PC-3 (cell line): ENCODE measurements at regions of chr21 and their contacts with region 1.

Region 1: DNA sequence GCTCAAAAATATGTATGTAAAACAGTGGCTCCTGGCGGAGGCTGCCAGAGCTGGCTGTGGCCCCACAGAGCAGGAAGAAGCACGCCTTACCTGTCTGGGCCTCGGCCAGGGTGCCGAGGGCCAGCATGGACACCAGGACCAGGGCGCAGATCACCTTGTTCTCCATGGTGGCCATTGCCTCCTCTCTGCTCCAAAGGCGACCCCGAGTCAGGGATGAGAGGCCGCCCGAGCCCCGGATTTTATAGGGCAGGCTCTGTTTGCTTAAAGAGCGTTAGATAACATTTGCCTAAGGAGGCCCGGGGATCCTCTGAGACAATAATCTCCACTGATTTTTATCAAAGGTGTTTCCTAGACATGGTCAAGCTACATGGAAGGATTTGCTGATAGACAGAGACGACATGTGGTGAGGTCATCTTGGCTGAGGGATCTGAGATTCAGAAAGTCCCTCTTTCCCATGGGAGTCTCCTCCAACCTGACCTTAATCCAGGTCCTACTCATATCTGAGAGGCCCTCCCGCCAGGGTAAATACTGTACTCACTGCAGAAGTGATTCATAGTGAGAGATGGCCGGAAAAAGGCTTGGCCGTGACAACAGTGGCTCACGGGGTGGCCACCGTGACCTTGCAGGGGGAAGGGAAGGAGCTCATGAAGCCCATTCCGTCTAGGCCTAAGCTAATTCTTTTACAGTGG is at the start of gene TFF1:
- DNase-seq: peak; percentile 95
- ATAC-seq: peak; percentile 93
- H3K4me3 ChIP-seq: no peak within 1 kb of the TSS
- H3K27ac ChIP-seq: peak within 1 kb of the TSS; percentile 97
- H3K4me1 ChIP-seq: peaks cover 56% of the 10 kb centered on the region
- H3K27me3 ChIP-seq: no peaks in the 10 kb centered on the region
- CTCF ChIP-seq: no peak
- total RNA-seq, gene TFF1: 99.2 and 111 TPM in 2 replicates

Region 2: DNA sequence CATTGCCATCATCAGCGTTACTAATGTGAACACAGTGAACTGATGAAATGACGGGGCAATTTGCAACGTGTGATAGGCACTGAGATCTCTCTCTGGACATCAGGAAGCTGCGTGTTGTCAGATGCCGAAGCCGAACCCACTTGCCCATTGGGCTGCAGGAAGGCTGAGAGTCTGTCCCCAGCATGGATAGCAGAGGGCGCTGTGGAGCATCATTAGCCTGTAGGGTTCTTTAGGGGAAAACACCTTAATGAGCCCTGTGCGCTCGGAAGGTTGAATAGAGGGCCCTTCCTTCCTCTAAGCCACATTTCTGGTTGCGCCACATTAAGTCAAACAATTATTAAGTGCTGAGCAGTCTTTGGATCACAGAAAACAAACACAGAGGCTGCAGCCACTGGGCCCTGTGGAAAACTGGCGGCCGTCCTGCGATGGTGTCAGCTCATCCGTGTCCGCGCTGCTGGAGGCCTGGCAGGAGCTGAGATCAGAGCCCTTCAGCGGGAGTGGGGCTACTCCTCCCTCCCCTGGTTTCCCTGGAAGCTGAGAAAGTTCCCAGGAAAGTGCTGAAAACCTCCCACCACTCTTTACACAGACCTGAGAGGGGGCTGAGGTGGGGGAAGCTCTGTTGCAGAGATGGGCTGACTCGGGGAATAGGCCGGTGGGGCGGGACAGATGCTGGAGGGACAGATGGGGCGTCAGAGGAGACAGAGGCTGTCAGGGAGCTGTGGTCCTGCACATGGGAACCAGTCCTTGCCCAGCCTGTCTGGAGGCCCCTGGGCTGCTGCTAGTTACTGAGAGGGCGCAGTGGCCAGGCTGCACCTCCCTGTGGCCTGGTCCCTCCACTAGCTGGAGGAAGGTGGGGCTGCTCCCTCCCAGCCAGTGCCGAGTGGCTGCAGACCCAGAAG is 28.4 kb before region 1 on chr21:
- CTCF ChIA-PET with region 1: interaction called, 18 read pairs
- POLR2A ChIA-PET with region 1: interaction called, 4 read pairs
- intact Hi-C with region 1: loop called (anchors 1 kb)
- DNase-seq: peak; percentile 95
- ATAC-seq: peak; percentile 92
- H3K4me3 ChIP-seq: peak overlapping the region; percentile 41
- H3K27ac ChIP-seq: peak overlapping the region; percentile 94
- H3K4me1 ChIP-seq: peaks cover 15% of the 10 kb centered on the region
- H3K27me3 ChIP-seq: no peaks in the 10 kb centered on the region
- CTCF ChIP-seq: peak; percentile 92

Region 3: DNA sequence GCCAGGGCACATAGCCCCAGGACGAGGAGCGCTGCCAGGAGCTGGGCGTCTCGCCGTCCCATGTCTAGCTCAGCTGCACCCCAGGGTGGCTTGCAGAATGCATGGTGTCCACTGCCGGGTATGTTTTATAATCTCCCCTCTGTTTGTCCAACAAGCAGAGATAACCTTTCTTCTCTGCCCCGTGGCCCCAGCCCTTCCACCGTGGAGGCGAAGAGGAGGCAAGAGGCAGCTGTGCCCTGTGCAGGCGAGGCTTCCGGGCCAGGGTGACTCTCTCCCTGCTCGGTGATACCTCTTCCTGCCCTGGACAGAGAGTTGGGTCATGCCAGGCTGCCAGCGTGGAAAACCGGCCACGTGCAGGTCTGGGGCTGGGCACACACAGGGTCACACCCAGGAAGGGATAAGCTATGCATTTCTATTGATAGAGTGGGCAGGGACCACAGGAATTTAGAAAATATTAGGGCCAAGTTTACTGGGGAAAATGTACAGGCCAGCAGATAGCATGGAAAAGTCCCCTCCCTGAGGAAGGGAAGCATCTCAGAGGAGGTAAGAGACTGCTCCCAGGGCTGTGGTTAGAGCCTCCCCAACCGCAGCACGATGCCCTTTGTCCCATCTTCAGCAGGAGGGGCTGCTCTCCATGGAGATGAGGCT is 15.4 kb before region 1 on chr21 and contains the start of gene TFF2:
- CTCF ChIA-PET with region 1: interaction called, 5 read pairs
- POLR2A ChIA-PET with region 1: interaction called, 7 read pairs
- intact Hi-C with region 1: loop called (anchors 1 kb)
- DNase-seq: peak; percentile 76
- ATAC-seq: peak; percentile 91
- H3K4me3 ChIP-seq: no peak within 1 kb of the TSS
- H3K27ac ChIP-seq: peak within 1 kb of the TSS; percentile 87
- H3K4me1 ChIP-seq: peaks cover 25% of the 10 kb centered on the region
- H3K27me3 ChIP-seq: no peaks in the 10 kb centered on the region
- CTCF ChIP-seq: no peak
- total RNA-seq, gene TFF2: 21.1 and 22.9 TPM in 2 replicates

Region 4: GRCh38 chr21:42381334-42381984 is 15.0 kb after region 1 on chr21:
- CTCF ChIA-PET with region 1: interaction called, 10 read pairs
- POLR2A ChIA-PET with region 1: interaction called, 11 read pairs
- intact Hi-C with region 1: loop called (anchors 2 kb)
- DNase-seq: peak; percentile 77
- ATAC-seq: peak; percentile 79
- H3K4me3 ChIP-seq: no peak overlapping the region
- H3K27ac ChIP-seq: peak overlapping the region; percentile 10; the same call in 1 of the 2 replicates
- H3K4me1 ChIP-seq: peaks cover 13% of the 10 kb centered on the region
- H3K27me3 ChIP-seq: no peaks in the 10 kb centered on the region
- CTCF ChIP-seq: peak; percentile 98

Region 5: DNA sequence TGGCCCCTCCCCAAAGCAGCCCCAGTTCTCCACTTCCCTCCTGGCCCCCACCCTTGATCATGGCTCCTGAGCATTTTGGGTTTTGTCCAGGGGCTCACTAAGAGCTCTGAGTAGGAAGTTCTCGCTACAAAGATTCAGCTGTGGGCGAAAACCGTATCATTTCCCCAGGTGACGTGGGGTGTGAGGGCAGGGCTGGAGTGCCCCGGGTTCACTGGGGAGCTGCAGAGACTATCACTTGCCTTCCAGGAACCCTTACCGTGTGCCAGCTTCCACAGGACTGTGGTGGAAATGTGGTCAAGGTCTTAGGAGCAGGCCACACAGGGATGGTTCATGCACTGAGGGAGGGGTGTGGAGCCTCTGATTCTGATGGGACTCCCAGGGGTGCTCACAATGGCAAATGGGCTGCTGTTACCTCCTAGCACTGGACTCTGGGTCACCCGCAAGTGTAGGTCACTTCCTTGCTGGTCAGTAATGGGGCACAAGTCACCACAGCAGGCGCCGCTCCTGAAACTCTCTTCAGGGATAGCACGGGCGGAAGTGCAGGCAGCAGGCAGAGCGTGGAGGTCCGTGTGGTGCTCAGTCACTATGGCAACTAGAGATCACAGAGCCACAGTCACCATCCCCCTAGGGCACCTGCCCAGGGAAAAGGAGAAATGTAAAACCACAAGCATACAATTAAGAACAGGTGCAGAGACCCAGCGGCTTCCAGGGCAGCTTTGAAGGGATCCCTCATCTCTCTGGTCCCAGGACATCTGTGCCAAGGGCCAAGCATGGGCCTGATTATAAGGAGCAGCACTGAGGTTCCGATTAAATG is 94.1 kb after region 1 on chr21:
- CTCF ChIA-PET with region 1: no interaction called
- POLR2A ChIA-PET with region 1: no interaction called
- intact Hi-C with region 1: no loop called
- DNase-seq: no peak
- ATAC-seq: no peak
- H3K4me3 ChIP-seq: no peak overlapping the region
- H3K27ac ChIP-seq: no peak overlapping the region
- H3K4me1 ChIP-seq: no peaks in the 10 kb centered on the region; the same call in 1 of the 2 replicates
- H3K27me3 ChIP-seq: no peaks in the 10 kb centered on the region
- CTCF ChIP-seq: no peak

Region 6: GRCh38 chr21:42698733-42699132 is 332.3 kb after region 1 on chr21:
- CTCF ChIA-PET with region 1: interaction called, 10 read pairs
- POLR2A ChIA-PET with region 1: no interaction called
- intact Hi-C with region 1: no loop called
- DNase-seq: no peak
- ATAC-seq: no peak
- H3K4me3 ChIP-seq: no peak overlapping the region
- H3K27ac ChIP-seq: no peak overlapping the region
- H3K4me1 ChIP-seq: no peaks in the 10 kb centered on the region
- H3K27me3 ChIP-seq: peaks cover 75% of the 10 kb centered on the region
- CTCF ChIP-seq: no peak

Region 7: GRCh38 chr21:42799516-42799915 is 433.1 kb after region 1 on chr21:
- CTCF ChIA-PET with region 1: no interaction called
- POLR2A ChIA-PET with region 1: no interaction called
- intact Hi-C with region 1: no loop called
- DNase-seq: peak; percentile 71
- ATAC-seq: peak; percentile 35; the same call in 1 of the 2 replicates
- H3K4me3 ChIP-seq: no peak overlapping the region
- H3K27ac ChIP-seq: peak overlapping the region; percentile 54
- H3K4me1 ChIP-seq: peaks cover 9% of the 10 kb centered on the region
- H3K27me3 ChIP-seq: no peaks in the 10 kb centered on the region
- CTCF ChIP-seq: no peak